Caco-2 (cell line): ENCODE measurements at regions of chr3 and their contacts with region 1.

Region 1: DNA sequence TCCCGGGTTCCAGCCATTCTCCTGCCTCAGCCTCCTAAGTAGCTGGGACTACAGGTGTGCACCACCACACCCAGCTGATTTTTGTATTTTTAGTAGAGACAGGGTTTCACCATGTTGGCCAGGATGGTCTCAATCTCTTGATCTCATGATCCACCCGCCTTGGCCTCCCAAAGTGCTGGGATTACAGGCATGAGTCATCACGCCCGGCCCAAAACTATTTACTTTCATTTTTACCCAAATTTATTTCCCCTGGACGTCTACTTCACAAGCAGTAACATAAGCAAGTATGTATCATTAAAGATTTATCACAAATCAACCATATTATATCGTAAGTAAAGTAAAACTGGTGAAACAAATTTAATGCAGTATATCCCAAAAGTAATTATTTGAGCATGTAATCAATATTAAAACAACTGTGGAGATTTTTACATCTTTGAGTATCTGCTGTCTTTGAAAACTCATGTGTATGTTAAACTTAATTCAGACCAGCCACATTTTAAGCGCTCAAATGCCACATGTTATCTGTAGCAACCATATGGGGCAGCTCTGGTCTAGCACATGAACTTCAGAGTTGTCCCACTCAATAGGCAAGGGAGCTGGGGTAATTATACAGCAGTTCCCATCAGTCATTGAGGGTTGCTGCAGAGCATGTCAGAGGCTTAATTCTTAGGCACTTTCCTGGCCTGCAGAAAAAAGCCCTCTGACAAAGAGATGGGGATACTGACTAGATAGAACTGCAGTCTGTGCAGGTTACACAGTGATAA is 185.7 kb upstream of the CTDSPL start:
- DNase-seq: no peak
- H3K4me3 ChIP-seq: no peak overlapping the region
- H3K4me3 Mint-ChIP-seq: no peak overlapping the region
- H3K27ac Mint-ChIP-seq: no peak overlapping the region
- H3K4me1 ChIP-seq: peaks cover 71% of the 10 kb centered on the region
- H3K4me1 Mint-ChIP-seq: peaks cover 29% of the 10 kb centered on the region
- H3K27me3 ChIP-seq: no peaks in the 10 kb centered on the region
- H3K27me3 Mint-ChIP-seq: no peaks in the 10 kb centered on the region
- CTCF ChIP-seq: no peak

Region 2: GRCh38 chr3:37400945-37401344 is 275.1 kb before region 1 on chr3:
- CTCF ChIA-PET with region 1: no interaction called
- POLR2A ChIA-PET with region 1: no interaction called
- intact Hi-C with region 1: no loop called
- DNase-seq: no peak
- H3K4me3 ChIP-seq: no peak overlapping the region
- H3K4me3 Mint-ChIP-seq: no peak overlapping the region
- H3K27ac Mint-ChIP-seq: no peak overlapping the region
- H3K4me1 ChIP-seq: no peaks in the 10 kb centered on the region
- H3K4me1 Mint-ChIP-seq: no peaks in the 10 kb centered on the region
- H3K27me3 ChIP-seq: no peaks in the 10 kb centered on the region
- H3K27me3 Mint-ChIP-seq: no peaks in the 10 kb centered on the region
- CTCF ChIP-seq: no peak

Region 3: GRCh38 chr3:37608061-37608702 is 67.8 kb before region 1 on chr3:
- CTCF ChIA-PET with region 1: no interaction called
- POLR2A ChIA-PET with region 1: no interaction called
- intact Hi-C with region 1: loop called (anchors 2 kb)
- DNase-seq: peak in 1 of 2 experiments; percentile 40
- H3K4me3 ChIP-seq: no peak overlapping the region
- H3K4me3 Mint-ChIP-seq: peak overlapping the region; percentile 19
- H3K27ac Mint-ChIP-seq: peak overlapping the region; percentile 73
- H3K4me1 ChIP-seq: peaks cover 32% of the 10 kb centered on the region
- H3K4me1 Mint-ChIP-seq: peaks cover 50% of the 10 kb centered on the region
- H3K27me3 ChIP-seq: no peaks in the 10 kb centered on the region
- H3K27me3 Mint-ChIP-seq: no peaks in the 10 kb centered on the region
- CTCF ChIP-seq: no peak

Region 4: GRCh38 chr3:37765591-37766488 is 89.8 kb after region 1 on chr3:
- CTCF ChIA-PET with region 1: no interaction called
- POLR2A ChIA-PET with region 1: no interaction called
- intact Hi-C with region 1: loop called (anchors 5 kb)
- DNase-seq: peak; percentile 57 to 80
- H3K4me3 ChIP-seq: no peak overlapping the region
- H3K4me3 Mint-ChIP-seq: peak overlapping the region; percentile 2
- H3K27ac Mint-ChIP-seq: peak overlapping the region; percentile 11
- H3K4me1 ChIP-seq: peaks cover 36% of the 10 kb centered on the region
- H3K4me1 Mint-ChIP-seq: peaks cover 49% of the 10 kb centered on the region
- H3K27me3 ChIP-seq: no peaks in the 10 kb centered on the region
- H3K27me3 Mint-ChIP-seq: no peaks in the 10 kb centered on the region
- CTCF ChIP-seq: no peak

Region 5: DNA sequence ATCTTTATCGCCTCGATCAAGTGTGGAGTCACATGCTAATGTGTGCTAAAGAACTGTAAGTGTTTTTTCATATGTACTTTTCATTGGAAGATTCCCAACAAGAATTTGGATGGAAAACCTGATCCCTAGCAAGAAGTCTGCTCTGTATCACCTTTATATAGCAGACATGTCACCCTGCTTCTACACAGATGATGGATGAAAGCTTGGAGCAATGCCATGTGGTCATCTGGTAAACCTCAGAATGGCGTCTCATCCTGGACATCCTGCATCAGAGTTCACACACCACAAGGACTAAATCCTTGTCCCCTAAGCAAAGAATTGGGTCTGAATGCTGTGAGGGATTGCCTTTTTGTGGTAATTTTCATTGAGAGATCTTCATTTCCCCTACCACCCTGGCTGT is 143.6 kb after region 1 on chr3:
- CTCF ChIA-PET with region 1: no interaction called
- POLR2A ChIA-PET with region 1: no interaction called
- intact Hi-C with region 1: no loop called
- DNase-seq: no peak
- H3K4me3 ChIP-seq: no peak overlapping the region
- H3K4me3 Mint-ChIP-seq: no peak overlapping the region
- H3K27ac Mint-ChIP-seq: no peak overlapping the region
- H3K4me1 ChIP-seq: no peaks in the 10 kb centered on the region
- H3K4me1 Mint-ChIP-seq: peaks cover 7% of the 10 kb centered on the region
- H3K27me3 ChIP-seq: no peaks in the 10 kb centered on the region
- H3K27me3 Mint-ChIP-seq: no peaks in the 10 kb centered on the region
- CTCF ChIP-seq: no peak